Activated naive CD4-positive, alpha-beta T cell treated with anti-CD3 and anti-CD28 coated beads for 36 hours (primary cell): ENCODE measurements at regions of chr14 and their contacts with region 1.

Region 1: GRCh38 chr14:49862089-49862673 is 9.6 kb upstream of the NEMF start:
- DNase-seq: peak; percentile 91
- H3K4me3 Mint-ChIP-seq: no peak overlapping the region
- H3K27ac Mint-ChIP-seq: no peak overlapping the region
- H3K4me1 Mint-ChIP-seq: peaks cover 14% of the 10 kb centered on the region
- H3K27me3 Mint-ChIP-seq: peaks cover 2% of the 10 kb centered on the region

Region 2: DNA sequence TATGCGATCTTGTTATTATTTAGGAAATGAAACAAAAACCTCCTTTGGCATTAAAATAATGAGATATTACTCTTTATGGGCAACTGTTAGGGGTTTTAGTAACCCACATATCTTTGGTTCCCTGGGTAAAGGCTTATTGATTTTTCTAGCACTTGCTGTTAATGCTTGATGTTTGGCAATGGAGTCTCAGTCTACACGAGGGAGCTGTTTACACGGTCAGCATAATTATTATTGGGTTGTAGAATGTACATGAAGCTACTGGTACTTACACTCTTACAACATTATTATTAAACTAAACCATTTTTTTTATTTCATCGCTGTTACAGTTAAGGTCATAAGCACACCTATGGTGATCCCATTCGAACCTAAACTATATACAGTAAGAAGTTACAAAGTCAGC is 288.1 kb before region 1 on chr14:
- CTCF ChIA-PET with region 1: no interaction called
- intact Hi-C with region 1: no loop called
- DNase-seq: no peak
- H3K4me3 Mint-ChIP-seq: no peak overlapping the region
- H3K27ac Mint-ChIP-seq: no peak overlapping the region
- H3K4me1 Mint-ChIP-seq: peaks cover 32% of the 10 kb centered on the region
- H3K27me3 Mint-ChIP-seq: no peaks in the 10 kb centered on the region

Region 3: GRCh38 chr14:49585803-49586672 is 276.1 kb before region 1 on chr14 and contains the start of gene RPS29:
- CTCF ChIA-PET with region 1: no interaction called
- intact Hi-C with region 1: loop called (anchors 1 kb)
- DNase-seq: peak; percentile 99
- H3K4me3 Mint-ChIP-seq: peak within 1 kb of the TSS; percentile 87
- H3K27ac Mint-ChIP-seq: peak within 1 kb of the TSS; percentile 98
- H3K4me1 Mint-ChIP-seq: peaks cover 40% of the 10 kb centered on the region
- H3K27me3 Mint-ChIP-seq: peaks cover 3% of the 10 kb centered on the region
- total RNA-seq, gene RPS29: 1,858 to 2,382 TPM

Region 4: GRCh38 chr14:49614196-49614595 is 248.0 kb before region 1 on chr14:
- CTCF ChIA-PET with region 1: no interaction called
- intact Hi-C with region 1: no loop called
- DNase-seq: no peak
- H3K4me3 Mint-ChIP-seq: no peak overlapping the region
- H3K27ac Mint-ChIP-seq: no peak overlapping the region
- H3K4me1 Mint-ChIP-seq: peaks cover 23% of the 10 kb centered on the region
- H3K27me3 Mint-ChIP-seq: no peaks in the 10 kb centered on the region

Region 5: DNA sequence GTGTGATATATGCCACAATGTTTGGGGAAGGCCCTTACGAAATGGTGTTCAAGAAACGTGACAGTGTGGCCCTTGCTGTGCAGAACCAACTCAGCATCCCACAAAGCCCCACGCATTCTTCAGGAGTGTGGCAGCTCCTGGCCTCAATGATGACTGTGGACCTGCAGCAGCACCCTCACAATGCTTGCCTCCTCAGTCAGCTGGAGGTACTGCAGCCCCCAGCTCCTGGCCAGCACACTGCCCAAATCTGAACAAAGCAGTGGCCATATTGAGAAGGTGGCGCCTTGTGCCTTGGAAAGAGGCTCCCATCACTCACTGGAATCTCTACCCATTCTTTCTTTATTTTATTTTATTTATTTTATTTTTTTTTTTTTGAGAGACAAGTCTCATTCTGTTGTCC is 184.5 kb before region 1 on chr14:
- CTCF ChIA-PET with region 1: no interaction called
- intact Hi-C with region 1: no loop called
- DNase-seq: no peak
- H3K4me3 Mint-ChIP-seq: no peak overlapping the region
- H3K27ac Mint-ChIP-seq: no peak overlapping the region
- H3K4me1 Mint-ChIP-seq: no peaks in the 10 kb centered on the region
- H3K27me3 Mint-ChIP-seq: no peaks in the 10 kb centered on the region

Region 6: GRCh38 chr14:49767562-49768300 is 94.5 kb before region 1 on chr14 and contains the start of gene KLHDC2:
- CTCF ChIA-PET with region 1: interaction called, 10 read pairs
- intact Hi-C with region 1: loop called (anchors 1 kb)
- DNase-seq: peak; percentile 91
- H3K4me3 Mint-ChIP-seq: peak within 1 kb of the TSS; percentile 94
- H3K27ac Mint-ChIP-seq: peak within 1 kb of the TSS; percentile 99
- H3K4me1 Mint-ChIP-seq: peaks cover 34% of the 10 kb centered on the region
- H3K27me3 Mint-ChIP-seq: no peaks in the 10 kb centered on the region
- total RNA-seq, gene KLHDC2: 24.3 to 25.0 TPM

Region 7: GRCh38 chr14:49808780-49809179 is 53.4 kb before region 1 on chr14:
- CTCF ChIA-PET with region 1: no interaction called
- intact Hi-C with region 1: no loop called
- DNase-seq: no peak
- H3K4me3 Mint-ChIP-seq: no peak overlapping the region
- H3K27ac Mint-ChIP-seq: no peak overlapping the region
- H3K4me1 Mint-ChIP-seq: no peaks in the 10 kb centered on the region
- H3K27me3 Mint-ChIP-seq: no peaks in the 10 kb centered on the region

Region 8: DNA sequence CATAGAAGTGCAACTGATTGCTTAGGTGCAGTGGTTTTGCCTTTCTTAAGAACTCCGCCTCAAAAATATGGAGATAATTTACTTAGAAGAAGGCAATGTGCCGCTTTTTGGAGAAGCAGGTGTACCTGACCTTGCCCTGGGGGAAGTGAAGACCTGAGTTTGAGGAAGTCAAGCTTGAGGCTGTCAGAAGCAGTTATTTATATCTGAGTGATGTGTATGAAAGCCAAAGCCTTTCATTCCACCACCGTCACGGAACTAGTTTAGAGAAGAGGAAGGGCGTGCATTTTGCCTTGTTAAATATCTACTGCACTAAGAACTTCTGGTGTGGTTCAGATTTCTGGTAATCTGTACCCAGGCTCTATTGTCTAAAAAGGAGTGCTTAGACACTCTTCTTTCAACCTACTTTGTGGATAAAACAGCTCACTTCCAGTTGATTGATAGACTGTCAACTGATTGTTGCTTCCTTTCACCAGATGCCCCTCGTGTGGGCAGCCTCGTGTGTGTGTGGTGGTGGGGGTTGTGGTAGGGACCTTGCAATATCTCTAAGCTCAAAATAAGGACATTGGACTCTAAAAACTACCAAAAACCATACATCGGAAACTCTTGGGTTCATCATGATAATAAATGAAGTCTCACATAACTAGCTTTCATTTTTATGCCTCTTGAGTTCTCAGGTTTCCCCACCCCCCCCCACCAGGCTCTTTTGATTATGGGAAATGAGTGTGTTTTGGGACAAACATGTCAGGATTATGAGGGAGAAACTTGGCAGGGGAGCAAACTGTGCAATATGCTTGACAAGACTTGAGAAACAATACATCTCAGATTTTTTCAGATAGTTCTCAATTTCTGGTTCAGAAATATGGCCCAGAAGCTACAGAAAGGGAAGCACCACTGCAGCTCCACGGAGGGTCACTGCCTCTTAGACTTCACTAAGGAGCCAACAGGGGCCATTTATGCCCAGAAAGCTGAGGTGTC is 109.3 kb after region 1 on chr14:
- CTCF ChIA-PET with region 1: interaction called, 11 read pairs
- intact Hi-C with region 1: loop called (anchors 1 kb)
- DNase-seq: peak; percentile 69
- H3K4me3 Mint-ChIP-seq: peak overlapping the region; percentile 73
- H3K27ac Mint-ChIP-seq: peak overlapping the region; percentile 97
- H3K4me1 Mint-ChIP-seq: peaks cover 59% of the 10 kb centered on the region
- H3K27me3 Mint-ChIP-seq: no peaks in the 10 kb centered on the region

Region 9: DNA sequence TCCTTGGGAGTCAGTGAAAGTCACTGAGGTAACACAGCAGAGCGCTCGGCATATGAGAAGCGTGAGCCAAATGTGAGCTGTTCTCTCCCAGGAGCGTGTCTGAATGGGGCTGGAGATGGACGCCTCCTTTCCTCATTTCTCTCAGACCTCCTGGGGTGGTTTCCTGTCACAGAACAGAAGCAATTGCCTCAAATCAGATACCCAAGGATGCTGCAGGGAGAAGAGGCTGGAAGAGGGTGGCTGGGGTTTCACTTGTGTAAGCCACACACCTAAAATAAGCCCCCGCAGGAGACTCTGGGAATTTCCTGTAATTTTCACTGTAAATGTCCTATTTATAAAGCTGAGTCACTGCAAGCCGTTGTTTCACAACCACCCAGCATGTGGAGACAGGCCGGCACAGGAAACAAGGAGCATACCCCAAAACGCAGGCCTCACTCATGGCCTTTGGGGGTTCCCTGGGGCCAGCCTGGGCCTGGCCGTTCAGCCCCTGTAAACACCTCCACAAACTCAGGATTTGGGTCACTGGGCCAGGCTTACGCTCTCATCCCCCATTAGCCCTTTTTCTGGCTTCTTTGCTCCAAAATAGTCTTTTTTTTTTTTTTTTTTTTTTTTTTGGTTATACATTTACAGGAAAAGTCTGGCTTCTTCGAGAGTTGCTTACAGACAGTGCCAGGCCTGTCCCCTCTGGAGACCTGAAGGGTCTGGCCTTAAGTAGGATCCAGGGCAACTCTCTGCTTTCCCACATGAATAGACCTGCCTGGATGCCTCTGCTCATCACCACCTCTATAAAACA is 198.9 kb after region 1 on chr14:
- CTCF ChIA-PET with region 1: interaction called, 17 read pairs
- intact Hi-C with region 1: no loop called
- DNase-seq: peak; percentile 64
- H3K4me3 Mint-ChIP-seq: peak overlapping the region; percentile 85
- H3K27ac Mint-ChIP-seq: peak overlapping the region; percentile 98
- H3K4me1 Mint-ChIP-seq: peaks cover 75% of the 10 kb centered on the region
- H3K27me3 Mint-ChIP-seq: no peaks in the 10 kb centered on the region

Region 10: GRCh38 chr14:50109342-50109741 is 247.2 kb after region 1 on chr14:
- CTCF ChIA-PET with region 1: interaction called, 49 read pairs
- intact Hi-C with region 1: loop called (anchors 1 kb)
- DNase-seq: no peak
- H3K4me3 Mint-ChIP-seq: no peak overlapping the region
- H3K27ac Mint-ChIP-seq: peak overlapping the region; percentile 59
- H3K4me1 Mint-ChIP-seq: peaks cover 43% of the 10 kb centered on the region
- H3K27me3 Mint-ChIP-seq: no peaks in the 10 kb centered on the region

Region 11: DNA sequence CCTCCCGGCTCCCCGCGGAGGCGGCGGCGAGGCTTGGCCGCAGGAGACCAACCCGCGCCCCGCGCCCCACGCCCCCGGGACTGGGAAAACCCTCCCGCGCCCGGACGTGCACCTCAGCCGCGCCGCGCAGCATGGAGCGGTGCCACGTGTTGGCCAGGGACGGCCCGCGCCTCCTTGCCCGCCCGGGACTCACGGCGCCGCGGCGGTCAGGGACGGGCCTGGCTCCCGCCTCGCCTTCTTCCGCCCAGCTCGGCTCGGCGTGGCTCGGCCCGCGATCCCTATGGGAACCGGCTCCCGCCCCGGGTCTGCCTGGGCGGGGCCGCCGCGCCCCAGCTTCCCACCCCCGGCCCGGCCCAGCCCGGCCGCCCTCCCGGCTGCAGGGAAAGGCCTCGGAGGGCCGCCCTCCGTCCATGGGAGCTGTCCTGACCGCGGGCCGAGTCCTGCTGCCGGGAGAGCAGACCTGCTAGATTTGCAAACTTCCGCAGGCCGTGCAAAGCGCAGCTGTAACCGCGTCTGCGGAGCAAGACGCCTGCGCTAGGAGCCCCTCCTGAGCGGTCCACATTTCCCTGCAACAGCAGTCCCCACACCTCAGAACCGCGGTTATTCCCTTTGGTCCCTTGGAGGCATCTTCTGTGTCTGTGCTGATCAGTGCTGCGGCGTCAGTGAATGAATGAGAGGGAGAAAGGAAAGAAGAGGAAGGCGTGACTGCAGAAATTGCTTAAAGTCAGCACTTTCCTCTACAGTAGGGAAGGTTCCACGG is 534.6 kb after region 1 on chr14 and contains the start of gene CDKL1:
- CTCF ChIA-PET with region 1: no interaction called
- intact Hi-C with region 1: loop called (anchors 5 kb)
- DNase-seq: peak; percentile 53
- H3K4me3 Mint-ChIP-seq: peak within 1 kb of the TSS; percentile 83
- H3K27ac Mint-ChIP-seq: peak within 1 kb of the TSS; percentile 59
- H3K4me1 Mint-ChIP-seq: peaks cover 13% of the 10 kb centered on the region
- H3K27me3 Mint-ChIP-seq: peaks cover 2% of the 10 kb centered on the region
- total RNA-seq, gene CDKL1: 1.5 to 2.0 TPM